Endothelial cell of umbilical vein (primary cell): ENCODE measurements at regions of chr20 and their contacts with region 1.

Region 1: GRCh38 chr20:3888622-3889488 is at the start of gene PANK2:
- DNase-seq: peak; percentile 99
- H3K4me3 ChIP-seq: peak within 1 kb of the TSS; percentile 87 to 100 (median 99)
- H3K27ac ChIP-seq: peak within 1 kb of the TSS; percentile 93
- H3K4me1 ChIP-seq: peaks cover 40% of the 10 kb centered on the region
- H3K27me3 ChIP-seq: no peaks in the 10 kb centered on the region
- CTCF ChIP-seq: peak; percentile 28 to 46
- POLR2A ChIP-seq: peak; percentile 92
- total RNA-seq, gene PANK2: 54.3 and 55.3 TPM in 2 replicates

Region 2: GRCh38 chr20:3927486-3928291 is 38.8 kb after region 1 on chr20:
- CTCF ChIA-PET with region 1: no interaction called
- POLR2A ChIA-PET with region 1: interaction called, 4 read pairs
- dilution Hi-C with region 1: no loop called
- intact Hi-C with region 1: loop called (anchors 2 kb)
- DNase-seq: no peak
- H3K4me3 ChIP-seq: no peak overlapping the region
- H3K27ac ChIP-seq: no peak overlapping the region
- H3K4me1 ChIP-seq: peaks cover 9% of the 10 kb centered on the region
- H3K27me3 ChIP-seq: no peaks in the 10 kb centered on the region
- CTCF ChIP-seq: no peak
- POLR2A ChIP-seq: no peak